WTC11 (cell line): ENCODE measurements at regions of chr19 and their contacts with region 1.

Region 1: GRCh38 chr19:10416380-10417257 is 3.7 kb upstream of the PDE4A start:
- DNase-seq: peak; percentile 97
- ATAC-seq: peak; percentile 52
- H3K4me3 Mint-ChIP-seq: peak overlapping the region; percentile 72
- H3K27ac Mint-ChIP-seq: peak overlapping the region; percentile 90
- H3K4me1 Mint-ChIP-seq: peaks cover 26% of the 10 kb centered on the region
- H3K27me3 Mint-ChIP-seq: peaks cover 85% of the 10 kb centered on the region
- CTCF ChIP-seq: peak; percentile 99

Region 2: GRCh38 chr19:10259162-10259905 is 157.3 kb before region 1 on chr19:
- CTCF ChIA-PET with region 1: interaction called, 33 read pairs
- POLR2A ChIA-PET with region 1: no interaction called
- DNase-seq: peak; percentile 96
- ATAC-seq: peak; percentile 91
- H3K4me3 Mint-ChIP-seq: no peak overlapping the region
- H3K27ac Mint-ChIP-seq: no peak overlapping the region
- H3K4me1 Mint-ChIP-seq: no peaks in the 10 kb centered on the region
- H3K27me3 Mint-ChIP-seq: peaks cover 3% of the 10 kb centered on the region; the same call in 1 of the 2 replicates
- CTCF ChIP-seq: peak; percentile 52

Region 3: DNA sequence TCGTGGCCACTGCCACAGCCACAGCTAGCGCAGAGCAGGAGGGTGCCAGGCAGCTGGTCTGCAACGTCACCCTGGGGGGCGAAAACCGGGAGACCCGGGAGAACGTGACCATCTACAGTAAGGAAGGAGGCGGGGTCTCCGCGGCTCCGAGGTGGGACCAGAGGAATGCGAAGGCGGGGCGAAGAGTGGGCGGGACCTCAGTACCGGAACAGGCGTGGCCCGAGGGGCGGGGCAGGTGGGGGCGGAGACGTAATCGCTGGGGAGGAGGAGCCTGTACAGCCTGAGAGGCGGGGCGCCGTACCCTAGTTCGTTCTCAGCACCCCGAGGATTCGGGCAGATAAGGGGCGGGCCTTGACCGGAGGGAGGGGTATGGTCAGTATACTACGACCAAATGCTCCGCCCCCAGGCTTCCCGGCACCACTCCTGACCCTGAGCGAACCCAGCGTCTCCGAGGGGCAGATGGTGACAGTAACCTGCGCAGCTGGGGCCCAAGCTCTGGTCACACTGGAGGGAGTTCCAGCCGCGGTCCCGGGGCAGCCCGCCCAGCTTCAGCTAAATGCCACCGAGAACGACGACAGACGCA is 124.3 kb before region 1 on chr19:
- CTCF ChIA-PET with region 1: interaction called, 19 read pairs
- POLR2A ChIA-PET with region 1: no interaction called
- DNase-seq: peak; percentile 99
- ATAC-seq: peak; percentile 73
- H3K4me3 Mint-ChIP-seq: peak overlapping the region; percentile 82
- H3K27ac Mint-ChIP-seq: no peak overlapping the region
- H3K4me1 Mint-ChIP-seq: peaks cover 39% of the 10 kb centered on the region
- H3K27me3 Mint-ChIP-seq: peaks cover 98% of the 10 kb centered on the region
- CTCF ChIP-seq: no peak

Region 4: GRCh38 chr19:10305139-10305806 is 111.3 kb before region 1 on chr19:
- CTCF ChIA-PET with region 1: no interaction called
- POLR2A ChIA-PET with region 1: no interaction called
- DNase-seq: no peak
- ATAC-seq: no peak
- H3K4me3 Mint-ChIP-seq: no peak overlapping the region
- H3K27ac Mint-ChIP-seq: no peak overlapping the region
- H3K4me1 Mint-ChIP-seq: no peaks in the 10 kb centered on the region
- H3K27me3 Mint-ChIP-seq: peaks cover 5% of the 10 kb centered on the region
- CTCF ChIP-seq: no peak

Region 5: DNA sequence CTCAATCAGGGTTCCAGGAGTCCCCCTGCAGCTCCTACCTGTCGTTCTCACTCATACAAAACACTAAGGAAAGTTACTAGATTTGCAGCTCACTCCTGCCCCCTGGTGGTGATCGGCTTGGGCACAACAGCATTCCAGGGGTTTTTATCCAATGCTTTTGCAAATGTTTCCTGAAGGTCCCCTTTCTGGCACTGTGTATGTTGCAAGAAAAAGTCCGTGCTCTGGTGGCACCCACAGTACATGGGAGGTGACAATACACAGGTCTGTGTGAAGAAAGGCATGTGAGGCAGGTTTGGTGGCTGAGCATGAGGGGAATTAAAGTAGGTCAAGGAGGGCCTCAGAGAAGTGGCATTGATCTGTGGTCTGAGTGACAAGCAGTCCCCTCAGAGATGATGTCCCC is 27.7 kb before region 1 on chr19:
- CTCF ChIA-PET with region 1: interaction called, 12 read pairs
- POLR2A ChIA-PET with region 1: no interaction called
- DNase-seq: peak; percentile 96
- ATAC-seq: peak; percentile 73
- H3K4me3 Mint-ChIP-seq: no peak overlapping the region
- H3K27ac Mint-ChIP-seq: no peak overlapping the region
- H3K4me1 Mint-ChIP-seq: peaks cover 5% of the 10 kb centered on the region; the same call in 1 of the 2 replicates
- H3K27me3 Mint-ChIP-seq: peaks cover 3% of the 10 kb centered on the region; the same call in 1 of the 2 replicates
- CTCF ChIP-seq: peak; percentile 90

Region 6: DNA sequence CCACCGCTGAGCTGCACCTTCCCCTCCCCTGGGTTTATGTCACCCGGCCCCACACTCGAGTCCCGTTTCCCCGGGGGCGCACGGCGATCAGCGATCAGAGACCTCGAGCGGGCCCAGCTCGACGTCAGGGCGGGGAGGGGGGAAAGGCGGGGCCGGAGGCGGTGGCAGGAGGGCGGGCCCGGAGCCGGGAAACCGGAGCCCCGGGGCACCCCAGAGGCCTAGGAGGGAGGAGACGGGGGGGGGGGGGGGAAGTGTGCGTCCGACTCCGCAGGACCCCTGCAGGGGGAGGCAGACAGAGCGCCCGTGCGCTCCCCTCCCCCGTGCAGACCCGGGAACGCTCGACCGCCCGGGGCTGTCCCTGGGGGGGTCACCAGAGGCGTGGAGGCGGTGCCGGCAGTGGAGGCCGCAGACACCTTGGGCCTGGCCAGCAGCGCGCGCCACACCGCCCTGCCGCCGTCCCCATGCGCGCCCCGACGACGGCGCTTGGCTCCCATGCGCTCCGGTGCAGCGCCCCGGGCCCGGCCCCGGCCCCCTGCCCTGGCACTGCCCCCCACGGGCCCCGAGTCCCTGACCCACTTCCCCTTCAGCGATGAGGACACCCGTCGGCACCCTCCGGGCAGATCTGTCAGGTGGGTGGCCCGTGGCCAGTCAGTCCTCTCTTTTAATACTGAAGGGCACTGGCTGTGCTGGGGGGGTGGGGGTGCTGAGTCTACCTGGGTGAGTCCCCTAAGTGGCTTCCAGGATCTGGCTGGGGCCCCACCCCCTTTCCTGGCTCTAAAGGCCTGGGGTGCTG is 15.5 kb after region 1 on chr19:
- CTCF ChIA-PET with region 1: interaction called, 69 read pairs
- POLR2A ChIA-PET with region 1: no interaction called
- DNase-seq: peak; percentile 64
- ATAC-seq: peak; percentile 63
- H3K4me3 Mint-ChIP-seq: peak overlapping the region; percentile 68
- H3K27ac Mint-ChIP-seq: no peak overlapping the region
- H3K4me1 Mint-ChIP-seq: peaks cover 16% of the 10 kb centered on the region
- H3K27me3 Mint-ChIP-seq: peaks cover 63% of the 10 kb centered on the region
- CTCF ChIP-seq: no peak

Region 7: GRCh38 chr19:10454267-10454666 is 37.6 kb after region 1 on chr19:
- CTCF ChIA-PET with region 1: interaction called, 18 read pairs
- POLR2A ChIA-PET with region 1: no interaction called
- DNase-seq: peak; percentile 81
- ATAC-seq: peak; percentile 76
- H3K4me3 Mint-ChIP-seq: no peak overlapping the region
- H3K27ac Mint-ChIP-seq: no peak overlapping the region
- H3K4me1 Mint-ChIP-seq: peaks cover 6% of the 10 kb centered on the region
- H3K27me3 Mint-ChIP-seq: no peaks in the 10 kb centered on the region; the same call in 1 of the 2 replicates
- CTCF ChIP-seq: no peak

Region 8: GRCh38 chr19:10478903-10479384 is 62.3 kb after region 1 on chr19:
- CTCF ChIA-PET with region 1: interaction called, 24 read pairs
- POLR2A ChIA-PET with region 1: no interaction called
- DNase-seq: peak; percentile 94
- ATAC-seq: peak; percentile 97
- H3K4me3 Mint-ChIP-seq: peak overlapping the region; percentile 53
- H3K27ac Mint-ChIP-seq: no peak overlapping the region
- H3K4me1 Mint-ChIP-seq: peaks cover 4% of the 10 kb centered on the region
- H3K27me3 Mint-ChIP-seq: peaks cover 22% of the 10 kb centered on the region
- CTCF ChIP-seq: peak; percentile 77; the same call in 1 of the 2 replicates